ENCODE measurements at regions of chr19 and their contacts with region 1.

Region 1: GRCh38 chr19:10602330-10603083 is 15.4 kb upstream of the AP1M2 start:
- DNase-seq: peak; percentile 79 to 96 (median 88)
- ATAC-seq: peak; percentile 79
- H3K4me3 ChIP-seq: peak overlapping the region; percentile 96
- H3K4me3 Mint-ChIP-seq: peak overlapping the region; percentile 100
- H3K27ac ChIP-seq: peak overlapping the region; percentile 99 to 100
- H3K27ac Mint-ChIP-seq: peak overlapping the region; percentile 95
- H3K4me1 ChIP-seq: peaks cover 44% of the 10 kb centered on the region
- H3K4me1 Mint-ChIP-seq: peaks cover 35% of the 10 kb centered on the region
- H3K27me3 ChIP-seq: no peaks in the 10 kb centered on the region
- H3K27me3 Mint-ChIP-seq: no peaks in the 10 kb centered on the region
- CTCF ChIP-seq: no peak

Region 2: DNA sequence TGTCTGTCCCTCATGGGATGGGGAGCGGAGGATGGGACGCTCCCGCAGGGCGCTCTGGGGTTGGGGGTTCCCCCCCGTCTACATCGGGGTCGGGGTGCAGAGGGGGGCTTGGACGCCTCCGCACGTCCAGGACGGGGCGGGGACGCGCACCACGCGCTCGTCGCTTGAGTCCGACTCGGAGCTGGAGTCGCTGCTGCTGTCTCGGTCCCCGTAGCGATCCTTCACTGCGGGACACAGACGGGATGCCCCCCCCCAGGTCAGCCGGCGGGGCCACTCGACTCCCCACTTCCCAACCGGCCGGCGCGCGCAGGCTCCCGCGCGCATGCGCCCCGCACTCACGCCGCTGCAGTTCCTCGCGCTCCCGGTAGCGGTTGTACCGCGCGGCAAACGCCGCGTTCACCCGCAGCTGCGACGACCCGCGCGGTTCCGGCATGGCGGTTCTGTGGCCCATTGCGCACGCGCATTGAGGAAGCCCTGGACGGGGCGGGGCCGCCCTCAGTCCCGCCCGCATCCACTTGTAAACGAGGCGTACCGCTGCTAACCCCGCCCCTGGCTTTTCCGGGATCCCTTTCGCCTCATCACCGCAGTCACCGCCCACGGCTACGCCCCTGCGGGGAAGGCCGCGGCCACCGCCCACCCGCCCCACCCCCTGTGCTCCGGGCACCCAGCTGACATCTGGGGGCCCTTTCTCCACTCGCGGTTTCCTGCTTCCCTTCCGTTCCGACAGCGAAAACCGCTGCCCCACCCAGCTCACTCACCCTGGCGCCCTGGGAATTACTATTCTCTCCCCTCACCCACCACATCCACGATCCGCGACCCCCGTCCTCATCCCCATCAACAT is 36.7 kb before region 1 on chr19 and contains the start of gene KRI1:
- CTCF ChIA-PET with region 1: no interaction called
- POLR2A ChIA-PET with region 1: interaction called, 29 read pairs
- intact Hi-C with region 1: no loop called
- DNase-seq: peak; percentile 97 to 100 (median 99)
- ATAC-seq: peak; percentile 52
- H3K4me3 ChIP-seq: peak within 1 kb of the TSS; percentile 87
- H3K4me3 Mint-ChIP-seq: peak within 1 kb of the TSS; percentile 93
- H3K27ac ChIP-seq: peak within 1 kb of the TSS; percentile 80 to 94
- H3K27ac Mint-ChIP-seq: peak within 1 kb of the TSS; percentile 95
- H3K4me1 ChIP-seq: peaks cover 56% of the 10 kb centered on the region
- H3K4me1 Mint-ChIP-seq: peaks cover 46% of the 10 kb centered on the region
- H3K27me3 ChIP-seq: no peaks in the 10 kb centered on the region
- H3K27me3 Mint-ChIP-seq: no peaks in the 10 kb centered on the region
- CTCF ChIP-seq: no peak
- total RNA-seq, gene KRI1: 36.8 to 39.6 TPM

Region 3: DNA sequence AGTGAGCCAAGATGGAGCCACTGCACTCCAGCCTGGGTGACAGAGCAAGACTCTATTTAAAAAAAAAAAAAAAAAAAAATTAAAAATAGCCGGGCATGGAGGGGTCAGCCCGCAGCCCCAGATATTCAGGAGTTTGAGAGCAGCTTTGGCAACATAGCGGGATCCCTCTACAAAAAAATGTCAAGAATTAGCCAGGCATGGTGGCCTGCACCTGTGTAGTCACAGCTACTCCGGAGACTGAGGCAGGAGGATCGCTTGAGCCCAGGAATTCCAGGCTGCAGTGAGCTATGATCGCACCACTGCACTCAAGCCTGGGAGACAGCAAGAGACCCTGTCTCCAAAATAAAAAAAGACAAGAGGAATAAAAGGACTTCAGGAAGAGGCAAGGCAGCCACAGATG is 16.1 kb before region 1 on chr19:
- CTCF ChIA-PET with region 1: interaction called, 24 read pairs
- POLR2A ChIA-PET with region 1: interaction called, 27 read pairs
- intact Hi-C with region 1: loop called (anchors 1 to 2 kb)
- DNase-seq: no peak
- ATAC-seq: no peak
- H3K4me3 ChIP-seq: no peak overlapping the region
- H3K4me3 Mint-ChIP-seq: no peak overlapping the region
- H3K27ac ChIP-seq: no peak overlapping the region
- H3K27ac Mint-ChIP-seq: no peak overlapping the region
- H3K4me1 ChIP-seq: peaks cover 11% of the 10 kb centered on the region
- H3K4me1 Mint-ChIP-seq: peaks cover 25% of the 10 kb centered on the region
- H3K27me3 ChIP-seq: no peaks in the 10 kb centered on the region
- H3K27me3 Mint-ChIP-seq: no peaks in the 10 kb centered on the region
- CTCF ChIP-seq: no peak

Region 4: GRCh38 chr19:10625003-10625776 is 22.7 kb after region 1 on chr19 and contains the start of gene SLC44A2:
- CTCF ChIA-PET with region 1: interaction called, 4 read pairs
- POLR2A ChIA-PET with region 1: interaction called, 40 read pairs
- intact Hi-C with region 1: no loop called
- DNase-seq: no peak
- ATAC-seq: no peak
- H3K4me3 ChIP-seq: no peak within 1 kb of the TSS
- H3K4me3 Mint-ChIP-seq: no peak within 1 kb of the TSS
- H3K27ac ChIP-seq: peak within 1 kb of the TSS; percentile 29 to 50
- H3K27ac Mint-ChIP-seq: peak within 1 kb of the TSS; percentile 81
- H3K4me1 ChIP-seq: peaks cover 39% of the 10 kb centered on the region
- H3K4me1 Mint-ChIP-seq: peaks cover 36% of the 10 kb centered on the region
- H3K27me3 ChIP-seq: no peaks in the 10 kb centered on the region
- H3K27me3 Mint-ChIP-seq: no peaks in the 10 kb centered on the region
- CTCF ChIP-seq: no peak
- total RNA-seq, gene SLC44A2: 151 to 168 TPM

Region 5: GRCh38 chr19:10653715-10654492 is 51.4 kb after region 1 on chr19 and contains the start of gene ILF3:
- CTCF ChIA-PET with region 1: interaction called, 4 read pairs
- POLR2A ChIA-PET with region 1: interaction called, 57 read pairs
- intact Hi-C with region 1: loop called (anchors 2 to 5 kb)
- DNase-seq: peak; percentile 99 to 100 (median 100)
- ATAC-seq: peak; percentile 74
- H3K4me3 ChIP-seq: peak within 1 kb of the TSS; percentile 92
- H3K4me3 Mint-ChIP-seq: peak within 1 kb of the TSS; percentile 94
- H3K27ac ChIP-seq: peak within 1 kb of the TSS; percentile 99 to 100
- H3K27ac Mint-ChIP-seq: peak within 1 kb of the TSS; percentile 92
- H3K4me1 ChIP-seq: peaks cover 58% of the 10 kb centered on the region
- H3K4me1 Mint-ChIP-seq: peaks cover 52% of the 10 kb centered on the region
- H3K27me3 ChIP-seq: no peaks in the 10 kb centered on the region
- H3K27me3 Mint-ChIP-seq: peaks cover 4% of the 10 kb centered on the region
- CTCF ChIP-seq: no peak
- total RNA-seq, gene ILF3: 464 to 491 TPM